Activated CD8-positive, alpha-beta T cell treated with anti-CD3 and anti-CD28 coated beads for 36 hours (primary cell): ENCODE measurements at regions of chr2 and their contacts with region 1.

Region 1: DNA sequence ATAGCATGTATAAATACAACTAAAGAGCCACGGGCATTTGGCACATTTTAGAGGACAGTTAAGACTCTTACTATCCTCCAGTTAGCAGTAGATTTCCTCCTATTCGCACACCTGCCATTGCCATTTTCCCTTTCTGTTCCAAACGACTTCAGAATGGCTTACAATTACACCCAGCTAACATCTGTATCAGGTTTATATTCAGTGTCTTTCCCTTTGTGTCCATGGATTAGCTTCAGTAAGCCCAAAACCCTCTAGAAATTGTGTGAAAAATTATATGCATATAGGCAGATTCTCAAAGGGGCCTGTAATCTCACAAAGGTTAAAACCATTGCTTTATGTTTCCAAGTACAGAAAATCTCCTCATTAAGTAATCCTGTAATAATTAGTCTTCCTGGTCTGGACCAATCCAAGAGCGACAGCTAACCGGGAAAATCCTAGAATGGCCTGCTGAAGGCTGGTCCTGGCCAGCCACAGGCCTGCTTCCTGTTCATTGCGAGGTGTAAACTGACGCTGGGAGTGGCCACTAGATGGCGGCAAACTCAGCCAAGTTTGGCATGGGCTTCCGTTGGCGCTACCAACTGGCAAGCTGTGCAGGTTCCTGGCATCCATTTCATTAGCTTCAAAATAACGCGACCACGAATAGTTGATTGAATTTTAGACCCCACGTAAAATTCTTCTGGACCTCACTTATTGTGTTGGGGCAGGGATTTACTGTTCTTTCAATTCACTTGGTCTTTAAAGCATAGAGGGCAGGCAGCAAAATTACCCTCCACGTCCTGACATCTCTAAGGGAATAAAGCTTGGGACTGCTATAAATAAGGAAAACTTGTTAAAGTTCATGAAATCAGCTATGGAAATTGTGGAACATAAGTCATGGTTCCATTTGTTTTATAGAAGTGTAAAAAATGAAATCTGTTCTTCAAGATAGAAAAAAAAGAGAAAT is 17.1 kb downstream of the ARHGAP25 start:
- DNase-seq: peak; percentile 97
- ATAC-seq: peak; percentile 90
- H3K4me3 Mint-ChIP-seq: peak overlapping the region; percentile 30
- H3K27ac Mint-ChIP-seq: peak overlapping the region; percentile 86
- H3K4me1 Mint-ChIP-seq: peaks cover 80% of the 10 kb centered on the region
- H3K27me3 Mint-ChIP-seq: no peaks in the 10 kb centered on the region
- CTCF ChIP-seq: peak; percentile 94

Region 2: DNA sequence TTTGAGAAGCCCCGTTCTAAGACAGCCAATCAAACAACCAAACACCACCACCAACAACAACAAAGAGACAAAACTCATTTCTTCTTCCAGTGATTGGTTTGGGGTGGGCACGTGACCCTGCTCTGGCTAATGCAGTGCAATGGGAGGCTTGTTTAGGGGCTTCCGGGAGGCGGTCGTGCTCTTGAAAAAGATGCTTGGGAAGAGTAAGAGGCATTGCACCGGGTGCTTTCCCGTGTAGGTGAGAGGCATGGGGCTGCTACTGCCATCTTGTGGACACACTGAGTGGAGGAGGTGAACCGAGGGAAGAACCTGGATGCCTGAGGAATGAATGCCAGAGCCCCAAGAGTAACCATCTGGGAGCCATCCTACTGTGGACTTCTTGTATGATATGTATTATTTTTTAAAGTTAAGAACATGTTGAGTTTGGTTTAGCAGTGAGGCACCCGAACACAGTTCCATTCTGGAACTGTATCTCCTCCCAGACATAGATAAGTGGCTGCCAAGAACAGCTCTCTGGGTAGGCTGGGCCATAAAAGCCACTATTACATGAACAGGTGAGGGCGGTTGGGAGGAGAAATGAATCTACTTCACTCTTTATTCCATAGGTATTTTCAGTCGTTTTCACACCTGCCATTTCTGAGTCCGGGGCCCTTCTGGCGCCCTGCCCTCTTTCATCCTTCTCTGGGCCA is 36.2 kb before region 1 on chr2:
- CTCF ChIA-PET with region 1: interaction called, 10 read pairs
- POLR2A ChIA-PET with region 1: interaction called, 5 read pairs
- intact Hi-C with region 1: no loop called
- DNase-seq: peak; percentile 66
- ATAC-seq: no peak
- H3K4me3 Mint-ChIP-seq: no peak overlapping the region
- H3K27ac Mint-ChIP-seq: peak overlapping the region; percentile 76
- H3K4me1 Mint-ChIP-seq: peaks cover 69% of the 10 kb centered on the region
- H3K27me3 Mint-ChIP-seq: peaks cover 2% of the 10 kb centered on the region
- CTCF ChIP-seq: peak; percentile 71

Region 3: DNA sequence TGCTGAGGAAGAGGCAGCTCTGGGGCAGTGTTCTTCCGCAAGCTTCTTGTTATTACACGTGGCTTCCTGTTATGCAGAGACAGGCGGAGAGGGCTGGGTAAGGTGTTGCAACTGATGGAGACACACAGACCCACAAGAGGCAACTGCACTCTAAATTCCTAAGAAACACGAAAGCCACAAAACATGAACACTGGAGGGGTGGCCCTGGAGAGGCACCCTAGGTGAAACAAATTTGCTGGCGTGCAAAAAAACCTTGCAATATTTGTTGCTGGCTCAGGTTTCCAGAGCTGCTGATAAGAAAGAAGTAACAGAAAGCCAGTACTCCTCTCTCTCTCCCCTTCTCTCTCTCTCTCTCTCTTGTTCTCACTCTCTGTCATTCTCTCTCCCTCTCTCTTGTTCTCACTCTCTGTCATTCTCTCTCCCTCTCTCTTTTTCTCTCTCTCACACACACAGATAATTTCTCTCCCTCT is 14.7 kb after region 1 on chr2:
- CTCF ChIA-PET with region 1: interaction called, 34 read pairs
- POLR2A ChIA-PET with region 1: interaction called, 15 read pairs
- intact Hi-C with region 1: no loop called
- DNase-seq: peak; percentile 80
- ATAC-seq: peak; percentile 51
- H3K4me3 Mint-ChIP-seq: peak overlapping the region; percentile 68
- H3K27ac Mint-ChIP-seq: peak overlapping the region; percentile 99
- H3K4me1 Mint-ChIP-seq: peaks cover 94% of the 10 kb centered on the region
- H3K27me3 Mint-ChIP-seq: no peaks in the 10 kb centered on the region
- CTCF ChIP-seq: no peak

Region 4: GRCh38 chr2:68789603-68790002 is 37.9 kb after region 1 on chr2:
- CTCF ChIA-PET with region 1: interaction called, 44 read pairs
- POLR2A ChIA-PET with region 1: interaction called, 4 read pairs
- intact Hi-C with region 1: no loop called
- DNase-seq: peak; percentile 82
- ATAC-seq: peak; percentile 87
- H3K4me3 Mint-ChIP-seq: no peak overlapping the region
- H3K27ac Mint-ChIP-seq: peak overlapping the region; percentile 60
- H3K4me1 Mint-ChIP-seq: peaks cover 51% of the 10 kb centered on the region
- H3K27me3 Mint-ChIP-seq: no peaks in the 10 kb centered on the region
- CTCF ChIP-seq: no peak

Region 5: DNA sequence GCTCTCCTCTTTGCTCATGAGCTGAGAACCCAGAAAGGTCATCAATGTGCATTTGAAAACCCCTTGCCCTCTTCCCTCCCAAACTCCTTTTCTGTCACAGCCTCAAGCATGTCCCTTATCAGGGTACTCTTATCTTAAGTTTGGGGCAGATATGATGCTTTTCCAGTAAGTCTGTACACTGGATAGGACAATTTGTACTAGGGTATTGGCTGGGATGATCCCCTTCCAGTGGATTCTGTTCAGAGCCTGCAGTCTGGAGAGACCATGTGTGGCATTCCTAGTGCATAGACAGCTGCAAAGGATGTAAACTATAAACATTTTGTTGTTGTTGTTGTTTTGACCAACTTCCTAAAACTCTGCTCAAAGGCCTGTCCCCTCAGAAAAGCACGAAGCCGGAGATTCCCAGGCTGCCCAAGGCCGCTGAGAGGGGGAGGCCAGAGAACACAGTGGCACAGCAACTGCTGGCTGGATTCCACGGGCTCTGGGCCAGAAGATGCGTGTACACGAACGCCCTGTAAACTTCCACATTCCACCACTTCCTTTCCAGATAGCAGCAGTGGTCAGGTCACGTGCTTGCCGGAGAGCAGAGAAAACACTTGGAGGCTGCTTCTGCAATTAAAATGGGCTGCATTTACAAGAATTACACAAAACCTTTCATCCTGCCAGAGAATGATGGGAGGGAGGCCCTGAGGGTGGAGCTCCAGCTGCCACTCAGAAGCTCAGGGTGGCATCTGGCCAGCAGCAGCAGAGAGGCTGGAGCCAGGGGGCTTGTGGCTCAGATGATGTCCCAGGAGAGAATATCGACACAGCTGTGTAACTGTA is 77.4 kb after region 1 on chr2:
- CTCF ChIA-PET with region 1: interaction called, 136 read pairs
- POLR2A ChIA-PET with region 1: no interaction called
- intact Hi-C with region 1: no loop called
- DNase-seq: peak; percentile 75
- ATAC-seq: peak; percentile 22
- H3K4me3 Mint-ChIP-seq: peak overlapping the region; percentile 42
- H3K27ac Mint-ChIP-seq: peak overlapping the region; percentile 87
- H3K4me1 Mint-ChIP-seq: peaks cover 71% of the 10 kb centered on the region
- H3K27me3 Mint-ChIP-seq: no peaks in the 10 kb centered on the region
- CTCF ChIP-seq: no peak

Region 6: DNA sequence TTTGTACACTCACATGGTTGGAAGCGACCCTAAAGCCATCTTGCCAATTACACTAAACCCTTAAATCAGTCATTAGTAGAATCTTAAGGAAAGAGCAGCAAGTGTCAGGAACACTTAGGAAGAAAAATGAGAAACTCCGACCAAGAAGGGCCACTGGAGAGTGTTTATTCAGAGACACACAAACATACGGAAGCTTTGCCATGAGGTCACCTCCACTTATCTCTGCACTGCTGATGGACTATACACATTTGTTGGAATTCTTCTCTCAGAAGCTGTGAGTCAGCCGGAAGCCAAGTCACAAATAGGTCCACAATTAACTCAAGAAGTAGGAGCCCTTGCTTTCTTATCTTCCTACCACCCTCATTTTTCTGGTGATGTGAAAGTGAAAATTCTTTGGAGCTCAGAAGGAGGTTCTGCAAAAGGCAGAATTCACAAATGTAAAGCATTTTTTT is 97.9 kb after region 1 on chr2:
- CTCF ChIA-PET with region 1: interaction called, 11 read pairs
- POLR2A ChIA-PET with region 1: no interaction called
- intact Hi-C with region 1: no loop called
- DNase-seq: no peak
- ATAC-seq: no peak
- H3K4me3 Mint-ChIP-seq: no peak overlapping the region
- H3K27ac Mint-ChIP-seq: no peak overlapping the region
- H3K4me1 Mint-ChIP-seq: no peaks in the 10 kb centered on the region
- H3K27me3 Mint-ChIP-seq: peaks cover 11% of the 10 kb centered on the region
- CTCF ChIP-seq: no peak

Region 7: GRCh38 chr2:68925295-68925896 is 173.7 kb after region 1 on chr2:
- CTCF ChIA-PET with region 1: interaction called, 80 read pairs
- POLR2A ChIA-PET with region 1: no interaction called
- intact Hi-C with region 1: no loop called
- DNase-seq: peak; percentile 67
- ATAC-seq: peak; percentile 87
- H3K4me3 Mint-ChIP-seq: no peak overlapping the region
- H3K27ac Mint-ChIP-seq: no peak overlapping the region
- H3K4me1 Mint-ChIP-seq: peaks cover 1% of the 10 kb centered on the region
- H3K27me3 Mint-ChIP-seq: peaks cover 2% of the 10 kb centered on the region
- CTCF ChIP-seq: peak; percentile 97